K562 (cell line): ENCODE measurements at regions of chr17 and their contacts with region 1.

Region 1: DNA sequence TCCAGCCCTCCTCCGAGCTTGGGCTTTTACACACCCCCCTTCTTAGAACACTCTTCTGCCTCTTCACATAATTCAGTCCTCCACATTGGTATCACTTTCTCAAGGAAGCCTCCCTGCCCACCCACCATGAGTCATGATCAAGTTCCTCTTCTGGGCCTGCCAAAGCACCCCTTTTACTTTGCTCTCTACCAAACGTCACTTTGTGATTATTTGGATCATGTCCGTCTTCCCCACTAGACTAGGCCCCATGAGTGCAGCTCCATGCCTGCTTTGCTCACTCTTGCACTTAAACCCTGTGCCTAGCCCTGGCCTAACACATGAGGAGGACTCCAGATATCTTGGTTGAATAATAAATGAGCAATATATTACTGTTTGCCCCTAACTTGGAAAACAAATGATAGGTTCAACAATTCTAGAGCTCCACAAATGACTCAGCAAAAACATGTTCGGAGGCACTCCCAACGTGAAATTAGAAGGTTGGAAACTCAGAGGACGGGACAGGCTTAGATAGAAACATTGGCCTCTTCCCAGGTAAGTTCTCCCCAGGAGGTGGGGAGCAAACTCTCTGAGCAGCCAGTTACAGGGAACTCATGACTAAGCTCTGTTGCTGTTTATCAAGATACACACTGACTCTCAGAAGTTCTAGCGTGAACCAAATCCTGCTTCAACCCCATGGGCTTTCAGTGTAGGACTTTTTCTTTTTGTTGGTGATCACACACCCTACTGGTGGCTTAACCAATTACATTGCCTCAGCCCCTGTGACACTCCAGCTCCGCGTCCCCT is 28.3 kb downstream of the G6PC1 start:
- DNase-seq: peak; percentile 86 to 95 (median 89)
- ATAC-seq: peak; percentile 99
- H3K4me3 ChIP-seq: peak overlapping the region; percentile 7; the same call in 1 of the 2 replicates
- H3K27ac ChIP-seq: peak overlapping the region; percentile 99
- H3K4me1 ChIP-seq: peaks cover 12% of the 10 kb centered on the region in 2 experiments; a peak in 4 of 5 replicates
- H3K27me3 ChIP-seq: no peaks in the 10 kb centered on the region
- CTCF ChIP-seq: peak; percentile 75 to 87 (median 84)
- EP300 ChIP-seq: peak; percentile 74
- POLR2A ChIP-seq: peak; percentile 48
- RAD21 ChIP-seq: peak; percentile 75 to 84

Region 2: GRCh38 chr17:42512626-42513250 is 416.2 kb before region 1 on chr17:
- CTCF ChIA-PET with region 1: no interaction called
- POLR2A ChIA-PET with region 1: no interaction called
- in situ Hi-C with region 1: no loop called
- intact Hi-C with region 1: no loop called
- DNase-seq: no peak
- ATAC-seq: no peak
- H3K4me3 ChIP-seq: no peak overlapping the region
- H3K27ac ChIP-seq: no peak overlapping the region; the same call in 2 of the 3 replicates
- H3K4me1 ChIP-seq: peaks cover 20 to 24% of the 10 kb centered on the region in 2 experiments
- H3K27me3 ChIP-seq: no peaks in the 10 kb centered on the region
- CTCF ChIP-seq: no peak
- EP300 ChIP-seq: no peak
- POLR2A ChIP-seq: no peak
- RAD21 ChIP-seq: no peak

Region 3: GRCh38 chr17:42586514-42587230 is 342.2 kb before region 1 on chr17:
- CTCF ChIA-PET with region 1: no interaction called
- POLR2A ChIA-PET with region 1: no interaction called
- in situ Hi-C with region 1: loop called (anchors 10 kb)
- intact Hi-C with region 1: no loop called
- DNase-seq: no peak
- ATAC-seq: no peak
- H3K4me3 ChIP-seq: no peak overlapping the region
- H3K27ac ChIP-seq: no peak overlapping the region
- H3K4me1 ChIP-seq: no peaks in the 10 kb centered on the region
- H3K27me3 ChIP-seq: no peaks in the 10 kb centered on the region
- CTCF ChIP-seq: no peak
- EP300 ChIP-seq: no peak
- POLR2A ChIP-seq: no peak
- RAD21 ChIP-seq: no peak